ENCODE measurements at regions of chr2 and their contacts with region 1.

Region 1: GRCh38 chr2:221228214-221228769 is 343.8 kb downstream of the EPHA4 start:
- DNase-seq: peak in 1 of 2 donors; percentile 13
- ATAC-seq: peak in 6 of 8 donors; percentile 38 to 90 (median 59)
- H3K4me3 ChIP-seq: no peak overlapping the region
- H3K27ac ChIP-seq: peak overlapping the region; percentile 10 to 78 (median 54)
- H3K4me1 ChIP-seq: peaks cover 0 to 27% (median 15%) of the 10 kb centered on the region in 9 donors
- H3K27me3 ChIP-seq: no peaks in the 10 kb centered on the region
- CTCF ChIP-seq: no peak

Region 2: DNA sequence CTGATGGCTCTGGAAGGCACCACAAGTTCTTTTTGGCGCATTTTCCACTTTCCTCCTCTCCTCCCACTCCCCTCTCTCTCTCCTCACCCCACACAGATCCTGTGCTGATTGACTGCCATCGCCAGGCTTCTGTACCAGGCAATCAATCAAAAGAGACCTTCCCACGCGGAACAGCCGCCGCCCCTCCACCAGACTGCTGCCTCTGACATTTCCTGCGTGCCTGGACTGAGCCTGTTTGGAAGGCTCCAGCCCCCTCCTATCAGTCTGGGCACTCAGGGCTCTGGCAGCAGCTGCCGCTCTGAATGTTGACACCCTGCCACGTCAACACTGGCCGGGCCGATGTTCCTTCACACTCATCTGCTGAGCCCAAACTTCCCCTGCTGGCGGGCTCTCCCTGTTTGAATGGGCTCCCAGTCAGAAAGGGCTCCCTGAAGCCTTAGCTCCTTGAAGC is 123.9 kb before region 1 on chr2:
- intact Hi-C with region 1: loop called in 2 of 10 experiments (anchors 5 kb)
- DNase-seq: peak; percentile 84 to 85
- ATAC-seq: peak; percentile 93 to 99 (median 98)
- H3K4me3 ChIP-seq: peak overlapping the region in 7 of 10 donors; percentile 8 to 36 (median 13)
- H3K27ac ChIP-seq: peak overlapping the region in 9 of 10 donors; percentile 30 to 80 (median 71)
- H3K4me1 ChIP-seq: peaks cover 10 to 31% (median 21%) of the 10 kb centered on the region in 9 donors
- H3K27me3 ChIP-seq: peaks cover 0 to 2% (median 0%) of the 10 kb centered on the region in 7 donors
- CTCF ChIP-seq: peak in 7 of 9 donors; percentile 11 to 49 (median 34)

Region 3: GRCh38 chr2:221109552-221109951 is 118.7 kb before region 1 on chr2:
- intact Hi-C with region 1: loop called in 2 of 10 experiments (anchors 5 kb)
- DNase-seq: no peak
- ATAC-seq: no peak
- H3K4me3 ChIP-seq: no peak overlapping the region
- H3K27ac ChIP-seq: no peak overlapping the region
- H3K4me1 ChIP-seq: peaks cover under 1 to 13% (median 8%) of the 10 kb centered on the region in 9 donors
- H3K27me3 ChIP-seq: peaks cover 0 to 3% (median 0%) of the 10 kb centered on the region in 7 donors
- CTCF ChIP-seq: no peak

Region 4: GRCh38 chr2:221176667-221177066 is 51.6 kb before region 1 on chr2:
- intact Hi-C with region 1: no loop called
- DNase-seq: no peak
- ATAC-seq: no peak
- H3K4me3 ChIP-seq: no peak overlapping the region
- H3K27ac ChIP-seq: no peak overlapping the region
- H3K4me1 ChIP-seq: no peaks in the 10 kb centered on the region
- H3K27me3 ChIP-seq: no peaks in the 10 kb centered on the region
- CTCF ChIP-seq: no peak

Region 5: DNA sequence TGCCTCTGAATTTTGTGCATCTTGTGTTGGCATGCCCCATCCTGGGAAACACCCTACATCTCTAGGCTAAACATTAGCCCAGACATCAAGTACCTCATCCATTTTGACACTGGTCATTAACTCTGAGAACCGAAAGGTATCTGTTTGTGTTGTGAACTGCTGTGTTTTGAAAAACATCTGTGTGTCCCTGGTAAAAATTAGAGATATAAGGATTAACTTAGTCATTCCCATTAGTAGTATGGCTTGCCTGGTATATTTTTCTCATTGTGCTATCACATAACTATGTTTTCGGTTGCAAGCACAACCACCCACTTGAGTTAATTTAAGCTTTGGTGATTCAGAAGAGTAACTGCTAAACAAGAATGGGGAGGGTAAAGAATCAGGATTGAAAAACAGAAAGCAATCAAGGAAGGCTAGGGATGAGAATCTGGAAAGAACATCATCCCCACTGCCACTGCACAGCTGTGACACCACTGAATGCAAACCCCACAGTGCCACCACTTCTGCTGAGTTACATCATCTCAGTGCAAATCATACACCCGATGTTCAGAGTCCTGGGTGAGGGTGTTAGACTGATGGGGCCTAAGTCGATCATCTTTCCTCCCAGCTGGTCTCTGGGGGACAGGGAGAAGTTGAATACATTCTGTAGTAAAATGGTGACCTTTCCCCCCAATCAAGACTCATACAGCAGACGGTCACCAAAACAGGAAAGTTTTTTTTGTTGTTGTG is 109.8 kb after region 1 on chr2:
- intact Hi-C with region 1: no loop called
- DNase-seq: no peak
- ATAC-seq: no peak
- H3K4me3 ChIP-seq: no peak overlapping the region
- H3K27ac ChIP-seq: no peak overlapping the region
- H3K4me1 ChIP-seq: no peaks in the 10 kb centered on the region
- H3K27me3 ChIP-seq: no peaks in the 10 kb centered on the region
- CTCF ChIP-seq: no peak

Region 6: DNA sequence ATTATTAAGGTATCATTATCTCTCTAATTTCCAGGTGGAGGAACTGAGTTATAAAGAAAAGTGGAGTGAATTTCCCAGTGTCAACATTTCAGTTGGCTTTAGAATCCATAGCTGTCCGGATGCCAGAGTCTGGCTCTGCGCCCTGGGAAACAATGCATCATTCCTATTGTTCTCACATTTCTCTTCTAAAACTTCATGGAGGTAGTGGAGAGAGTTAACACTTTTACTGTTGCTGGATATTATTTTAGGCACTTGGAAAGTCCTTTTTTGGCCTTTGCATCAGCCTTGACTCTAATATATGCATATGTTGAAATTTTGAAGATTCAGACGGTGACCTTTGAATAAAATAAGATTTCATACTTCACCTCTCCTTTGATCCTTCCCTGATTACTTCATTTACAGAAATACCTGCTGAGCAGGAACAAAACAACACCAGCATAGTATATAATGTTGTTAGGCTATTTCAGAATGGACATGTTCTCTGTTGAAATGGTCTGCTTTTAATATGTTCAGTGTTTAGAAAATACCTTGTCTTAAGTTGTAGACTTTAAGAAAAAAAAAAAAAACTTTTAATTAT is 195.0 kb after region 1 on chr2:
- intact Hi-C with region 1: loop called in 2 of 10 experiments (anchors 5 to 10 kb)
- DNase-seq: peak; percentile 20 to 62
- ATAC-seq: peak in 5 of 8 donors; percentile 33 to 89 (median 72)
- H3K4me3 ChIP-seq: no peak overlapping the region
- H3K27ac ChIP-seq: peak overlapping the region in 6 of 10 donors; percentile 2 to 56 (median 30)
- H3K4me1 ChIP-seq: peaks cover 0 to 29% (median 5%) of the 10 kb centered on the region in 9 donors
- H3K27me3 ChIP-seq: no peaks in the 10 kb centered on the region
- CTCF ChIP-seq: no peak

Measured in heart right ventricle (tissue), 16 donors.